Activated naive CD4-positive, alpha-beta T cell treated with anti-CD3 and anti-CD28 coated beads for 36 hours (primary cell): ENCODE measurements at regions of chr15 and their contacts with region 1.

Region 1: GRCh38 chr15:51281368-51281967 is 56.9 kb downstream of the CYP19A1 start:
- DNase-seq: peak; percentile 48
- H3K4me3 Mint-ChIP-seq: no peak overlapping the region
- H3K27ac Mint-ChIP-seq: no peak overlapping the region
- H3K4me1 Mint-ChIP-seq: no peaks in the 10 kb centered on the region
- H3K27me3 Mint-ChIP-seq: peaks cover 14% of the 10 kb centered on the region

Region 2: GRCh38 chr15:51155891-51156290 is 125.6 kb before region 1 on chr15:
- CTCF ChIA-PET with region 1: no interaction called
- intact Hi-C with region 1: no loop called
- DNase-seq: no peak
- H3K4me3 Mint-ChIP-seq: no peak overlapping the region
- H3K27ac Mint-ChIP-seq: no peak overlapping the region
- H3K4me1 Mint-ChIP-seq: no peaks in the 10 kb centered on the region
- H3K27me3 Mint-ChIP-seq: peaks cover 7% of the 10 kb centered on the region

Region 3: DNA sequence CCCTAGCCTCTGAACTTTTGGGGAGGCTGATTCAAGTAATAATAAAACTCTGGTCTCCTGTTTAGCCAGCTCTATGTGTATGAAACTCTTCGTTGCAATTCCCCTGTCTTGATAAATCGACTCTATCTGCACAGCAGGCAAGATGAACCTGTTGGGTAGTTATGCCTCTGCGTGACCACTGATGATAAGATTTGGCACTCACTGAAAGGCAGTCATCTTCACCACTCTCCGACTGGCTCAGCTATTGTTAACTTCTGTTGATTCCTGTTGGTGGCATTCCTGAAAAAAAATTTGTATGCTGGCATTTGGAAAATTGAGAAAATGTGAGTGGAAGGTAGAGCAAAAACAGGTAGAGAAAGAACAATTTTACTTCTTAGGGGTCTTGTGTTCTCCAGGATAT is 71.8 kb after region 1 on chr15:
- CTCF ChIA-PET with region 1: no interaction called
- intact Hi-C with region 1: no loop called
- DNase-seq: no peak
- H3K4me3 Mint-ChIP-seq: no peak overlapping the region
- H3K27ac Mint-ChIP-seq: no peak overlapping the region
- H3K4me1 Mint-ChIP-seq: peaks cover 2% of the 10 kb centered on the region
- H3K27me3 Mint-ChIP-seq: peaks cover 13% of the 10 kb centered on the region

Region 4: DNA sequence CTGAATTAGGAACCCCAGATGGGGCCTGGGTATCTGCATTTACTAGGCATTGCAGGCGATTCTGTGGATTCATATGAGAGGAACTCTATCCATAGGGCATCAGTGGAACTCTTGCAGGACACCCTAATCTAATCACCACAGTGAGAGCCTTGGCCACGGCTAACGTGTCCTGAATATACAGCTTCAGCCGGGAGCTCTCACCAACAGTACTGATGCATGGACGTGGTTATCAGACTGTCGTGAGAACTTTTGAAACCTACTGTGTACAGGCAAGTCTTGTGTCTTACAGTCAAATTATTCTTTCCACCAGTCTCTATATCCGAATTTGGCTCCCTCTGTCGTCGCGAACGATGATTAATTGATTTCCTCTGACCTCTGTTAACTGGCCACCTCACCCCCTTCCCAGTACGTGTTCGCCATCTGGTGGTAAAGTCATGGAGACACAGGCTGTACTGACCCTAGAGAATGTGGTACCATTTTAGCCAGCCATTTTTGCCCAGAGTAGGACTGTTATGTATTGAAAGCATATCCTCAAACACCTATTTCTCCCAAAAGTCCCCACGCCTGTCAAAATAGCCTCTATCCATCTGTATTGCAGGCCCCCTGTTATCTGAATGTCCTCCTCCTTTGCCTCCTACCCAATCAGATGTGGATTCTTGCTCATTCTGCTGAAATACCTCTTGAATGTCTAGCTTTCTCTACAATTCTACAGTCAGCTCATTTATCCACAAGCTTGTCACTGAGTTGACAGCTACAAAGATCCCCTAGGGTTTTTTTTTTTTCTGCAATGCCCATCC is 99.7 kb after region 1 on chr15:
- CTCF ChIA-PET with region 1: interaction called, 8 read pairs
- intact Hi-C with region 1: loop called (anchors 1 kb)
- DNase-seq: peak; percentile 58
- H3K4me3 Mint-ChIP-seq: no peak overlapping the region
- H3K27ac Mint-ChIP-seq: no peak overlapping the region
- H3K4me1 Mint-ChIP-seq: no peaks in the 10 kb centered on the region
- H3K27me3 Mint-ChIP-seq: peaks cover 18% of the 10 kb centered on the region

Region 5: GRCh38 chr15:51401872-51402517 is 120.5 kb after region 1 on chr15:
- CTCF ChIA-PET with region 1: interaction called, 4 read pairs
- intact Hi-C with region 1: loop called (anchors 5 kb)
- DNase-seq: peak; percentile 7
- H3K4me3 Mint-ChIP-seq: no peak overlapping the region
- H3K27ac Mint-ChIP-seq: no peak overlapping the region
- H3K4me1 Mint-ChIP-seq: no peaks in the 10 kb centered on the region
- H3K27me3 Mint-ChIP-seq: peaks cover 15% of the 10 kb centered on the region

Region 6: GRCh38 chr15:51499379-51499976 is 218.0 kb after region 1 on chr15:
- CTCF ChIA-PET with region 1: interaction called, 4 read pairs
- intact Hi-C with region 1: loop called (anchors 5 kb)
- DNase-seq: no peak
- H3K4me3 Mint-ChIP-seq: no peak overlapping the region
- H3K27ac Mint-ChIP-seq: no peak overlapping the region
- H3K4me1 Mint-ChIP-seq: no peaks in the 10 kb centered on the region
- H3K27me3 Mint-ChIP-seq: no peaks in the 10 kb centered on the region